Esophagus squamous epithelium (tissue), 5 donors: ENCODE measurements at regions of chr14 and their contacts with region 1.

Region 1: DNA sequence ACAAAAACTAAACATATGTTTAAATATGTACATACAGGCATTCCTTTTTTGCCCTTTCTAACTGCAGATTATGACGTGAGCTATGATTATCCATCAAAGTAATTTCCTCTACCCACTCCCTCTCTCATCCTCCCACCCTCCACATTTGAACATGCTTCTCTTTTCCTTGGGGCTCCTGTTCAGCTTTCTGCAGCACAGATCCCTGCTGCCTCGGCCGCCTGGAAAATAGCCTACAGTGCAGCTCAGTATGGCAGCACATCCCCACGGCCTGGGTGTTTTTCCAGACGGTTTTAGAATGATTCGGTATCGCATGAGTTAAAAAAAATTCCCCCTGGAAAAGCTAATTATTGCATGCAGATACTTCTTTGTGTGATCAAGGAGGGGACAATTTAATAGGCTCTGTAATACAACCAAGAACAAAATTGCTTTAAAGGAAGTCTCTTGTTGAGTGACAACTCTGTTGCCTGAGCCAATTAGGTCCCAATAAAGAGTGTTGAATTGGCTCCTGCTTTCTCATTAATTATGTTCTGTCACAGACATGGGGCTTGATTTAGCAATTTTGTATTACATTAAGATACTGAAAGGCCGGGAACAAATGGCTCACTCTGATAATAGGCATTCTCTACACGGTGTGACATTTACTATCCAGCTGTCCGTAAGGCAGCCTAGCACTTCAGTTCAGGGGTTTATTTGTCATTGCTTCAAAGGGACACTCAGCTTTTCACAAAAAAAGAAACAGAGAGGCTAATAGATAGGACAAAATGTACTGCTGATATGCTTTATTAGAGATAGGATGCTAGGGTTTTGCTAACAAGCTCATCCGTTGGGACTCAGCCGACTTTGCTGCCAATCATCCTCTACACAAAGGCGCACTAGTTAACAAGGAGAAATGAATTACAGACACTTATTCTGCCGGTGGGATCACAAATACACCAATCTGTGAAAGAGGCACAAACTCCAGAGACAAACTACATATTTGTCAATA is 285.8 kb upstream of the G2E3 start:
- DNase-seq: no peak
- H3K4me3 ChIP-seq: no peak overlapping the region
- H3K27ac ChIP-seq: no peak overlapping the region
- H3K4me1 ChIP-seq: peaks cover 0 to 9% (median 6%) of the 10 kb centered on the region in 3 donors
- H3K27me3 ChIP-seq: peaks cover 0 to 6% (median 0%) of the 10 kb centered on the region in 4 donors
- CTCF ChIP-seq: no peak
- POLR2A ChIP-seq: no peak

Region 2: GRCh38 chr14:30195941-30196340 is 77.2 kb before region 1 on chr14:
- intact Hi-C with region 1: no loop called
- DNase-seq: no peak
- H3K4me3 ChIP-seq: no peak overlapping the region
- H3K27ac ChIP-seq: peak overlapping the region in 1 of 4 donors; percentile 2
- H3K4me1 ChIP-seq: no peaks in the 10 kb centered on the region
- H3K27me3 ChIP-seq: no peaks in the 10 kb centered on the region
- CTCF ChIP-seq: no peak
- POLR2A ChIP-seq: no peak

Region 3: DNA sequence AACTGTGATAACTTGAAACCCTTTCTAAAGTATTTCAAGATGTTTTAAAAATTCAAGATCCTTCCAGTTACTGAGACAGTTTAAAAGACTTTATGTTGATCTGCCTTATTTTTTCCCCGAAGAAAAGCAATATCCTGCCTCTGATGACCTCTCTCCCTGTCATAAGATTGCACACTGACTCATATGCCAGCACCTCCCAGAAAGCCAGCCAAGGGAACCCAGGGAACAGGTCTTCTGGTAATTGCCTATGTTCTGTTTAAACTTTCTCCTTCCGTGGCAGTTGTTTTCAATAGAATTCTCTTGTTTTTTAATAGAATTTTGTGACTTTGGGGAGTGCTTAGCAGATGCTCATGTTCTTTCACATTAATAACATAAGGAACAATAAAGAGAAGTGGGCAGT is 45.3 kb before region 1 on chr14:
- intact Hi-C with region 1: loop called (anchors 2 kb)
- DNase-seq: no peak
- H3K4me3 ChIP-seq: no peak overlapping the region
- H3K27ac ChIP-seq: peak overlapping the region in 3 of 4 donors; percentile 63 to 81 (median 79)
- H3K4me1 ChIP-seq: peaks cover 0 to 55% (median 29%) of the 10 kb centered on the region in 3 donors
- H3K27me3 ChIP-seq: no peaks in the 10 kb centered on the region
- CTCF ChIP-seq: no peak
- POLR2A ChIP-seq: no peak

Region 4: GRCh38 chr14:30312214-30312613 is 39.1 kb after region 1 on chr14:
- intact Hi-C with region 1: no loop called
- DNase-seq: no peak
- H3K4me3 ChIP-seq: no peak overlapping the region
- H3K27ac ChIP-seq: no peak overlapping the region
- H3K4me1 ChIP-seq: no peaks in the 10 kb centered on the region
- H3K27me3 ChIP-seq: no peaks in the 10 kb centered on the region
- CTCF ChIP-seq: no peak
- POLR2A ChIP-seq: no peak